MCF 10A (cell line): ENCODE measurements at regions of chr10 and their contacts with region 1.

Region 1: GRCh38 chr10:102752934-102753664 is 9.4 kb downstream of the WBP1L start:
- DNase-seq: peak; percentile 63
- H3K4me3 Mint-ChIP-seq: peak overlapping the region; percentile 27
- H3K27ac Mint-ChIP-seq: peak overlapping the region; percentile 88
- H3K4me1 Mint-ChIP-seq: peaks cover 27% of the 10 kb centered on the region
- H3K27me3 Mint-ChIP-seq: no peaks in the 10 kb centered on the region
- CTCF ChIP-seq: peak; percentile 45

Region 2: DNA sequence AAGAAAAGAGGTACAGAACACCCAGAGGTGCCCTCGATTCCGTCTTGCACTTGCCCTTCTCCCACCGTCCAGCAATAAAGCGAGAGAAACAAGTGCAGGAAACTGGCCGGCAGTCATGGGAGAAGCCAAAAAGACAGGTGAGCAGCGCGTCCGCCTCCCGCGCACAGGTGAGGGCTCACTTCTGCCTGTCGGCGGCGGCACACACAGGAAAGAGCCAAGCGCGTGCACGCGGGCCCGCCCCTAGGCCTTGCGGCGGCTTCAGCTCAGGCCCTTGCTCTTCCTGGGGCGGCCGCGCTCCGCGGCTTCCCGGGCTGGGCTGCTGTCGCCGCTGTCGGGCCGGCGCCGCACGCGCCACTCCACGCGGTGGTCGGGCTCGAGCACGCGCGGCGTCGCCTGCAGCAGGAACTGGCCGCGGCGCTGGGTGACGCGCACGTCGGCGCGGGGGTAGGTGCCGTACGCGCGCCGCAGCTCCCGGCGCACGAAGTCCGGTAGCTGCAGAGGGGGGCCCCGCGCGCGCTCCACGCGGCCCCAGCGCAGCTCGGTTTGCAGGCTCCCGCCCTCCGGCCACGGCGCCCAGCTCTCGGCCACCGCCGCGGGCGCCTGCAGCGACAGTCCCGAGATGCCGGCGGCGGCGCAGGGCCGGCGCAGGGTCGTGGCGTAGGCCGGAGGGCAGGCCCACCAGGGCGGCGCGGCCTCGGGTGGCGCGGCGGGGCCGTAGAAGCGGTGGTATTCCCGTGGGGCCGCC is 302.7 kb before region 1 on chr10:
- CTCF ChIA-PET with region 1: no interaction called
- POLR2A ChIA-PET with region 1: no interaction called
- intact Hi-C with region 1: no loop called
- DNase-seq: peak; percentile 76
- H3K4me3 Mint-ChIP-seq: peak overlapping the region; percentile 89
- H3K27ac Mint-ChIP-seq: peak overlapping the region; percentile 80
- H3K4me1 Mint-ChIP-seq: peaks cover 7% of the 10 kb centered on the region
- H3K27me3 Mint-ChIP-seq: no peaks in the 10 kb centered on the region
- CTCF ChIP-seq: no peak

Region 3: GRCh38 chr10:102665904-102666509 is 87.1 kb before region 1 on chr10:
- CTCF ChIA-PET with region 1: no interaction called
- POLR2A ChIA-PET with region 1: no interaction called
- intact Hi-C with region 1: no loop called
- DNase-seq: no peak
- H3K4me3 Mint-ChIP-seq: no peak overlapping the region
- H3K27ac Mint-ChIP-seq: no peak overlapping the region
- H3K4me1 Mint-ChIP-seq: peaks cover 10% of the 10 kb centered on the region
- H3K27me3 Mint-ChIP-seq: no peaks in the 10 kb centered on the region
- CTCF ChIP-seq: no peak

Region 4: DNA sequence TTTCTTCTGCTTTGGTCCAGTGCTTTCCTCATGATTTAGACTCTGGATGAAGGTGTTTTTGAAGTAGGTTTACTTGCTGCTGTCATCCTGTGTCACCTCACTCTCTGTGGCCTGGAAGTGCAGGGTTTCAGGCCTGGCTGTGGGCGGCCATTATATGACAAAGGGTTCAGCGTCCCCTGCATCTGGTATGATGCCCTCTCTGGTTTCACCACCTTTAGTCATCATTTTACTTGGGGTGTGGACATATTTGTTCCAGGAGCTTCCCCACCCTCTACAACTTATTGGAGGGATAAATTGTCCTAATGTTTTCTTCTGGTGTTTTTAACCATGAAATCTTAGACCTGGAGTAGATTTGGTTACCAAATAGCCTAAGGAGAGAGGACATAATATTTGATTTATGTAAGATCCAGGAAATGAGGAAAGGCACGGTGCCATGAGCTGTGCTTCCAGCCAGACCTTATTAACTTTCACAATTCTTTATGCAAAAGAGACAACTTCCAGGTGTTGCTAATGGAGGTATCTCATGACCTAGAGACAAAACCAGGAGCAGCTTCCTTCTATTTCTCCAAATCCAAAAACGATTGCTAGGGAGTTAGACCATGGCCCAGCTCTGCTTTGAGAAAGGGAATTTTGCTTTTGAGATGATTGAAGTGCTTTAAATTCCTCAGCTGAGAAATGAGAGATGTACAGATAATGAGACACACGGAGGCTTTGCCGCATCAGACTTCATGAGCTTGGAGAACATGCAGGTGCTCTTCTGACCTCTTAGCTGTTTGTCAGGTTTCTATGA is 11.5 kb after region 1 on chr10:
- CTCF ChIA-PET with region 1: interaction called, 71 read pairs
- POLR2A ChIA-PET with region 1: interaction called, 25 read pairs
- intact Hi-C with region 1: no loop called
- DNase-seq: peak; percentile 43
- H3K4me3 Mint-ChIP-seq: no peak overlapping the region
- H3K27ac Mint-ChIP-seq: peak overlapping the region; percentile 42
- H3K4me1 Mint-ChIP-seq: peaks cover 24% of the 10 kb centered on the region
- H3K27me3 Mint-ChIP-seq: no peaks in the 10 kb centered on the region
- CTCF ChIP-seq: no peak

Region 5: GRCh38 chr10:102776779-102777456 is 23.8 kb after region 1 on chr10:
- CTCF ChIA-PET with region 1: interaction called, 68 read pairs
- POLR2A ChIA-PET with region 1: interaction called, 120 read pairs
- intact Hi-C with region 1: loop called (anchors 2 kb)
- DNase-seq: peak; percentile 94
- H3K4me3 Mint-ChIP-seq: peak overlapping the region; percentile 64
- H3K27ac Mint-ChIP-seq: peak overlapping the region; percentile 64
- H3K4me1 Mint-ChIP-seq: peaks cover 41% of the 10 kb centered on the region
- H3K27me3 Mint-ChIP-seq: no peaks in the 10 kb centered on the region
- CTCF ChIP-seq: no peak

Region 6: DNA sequence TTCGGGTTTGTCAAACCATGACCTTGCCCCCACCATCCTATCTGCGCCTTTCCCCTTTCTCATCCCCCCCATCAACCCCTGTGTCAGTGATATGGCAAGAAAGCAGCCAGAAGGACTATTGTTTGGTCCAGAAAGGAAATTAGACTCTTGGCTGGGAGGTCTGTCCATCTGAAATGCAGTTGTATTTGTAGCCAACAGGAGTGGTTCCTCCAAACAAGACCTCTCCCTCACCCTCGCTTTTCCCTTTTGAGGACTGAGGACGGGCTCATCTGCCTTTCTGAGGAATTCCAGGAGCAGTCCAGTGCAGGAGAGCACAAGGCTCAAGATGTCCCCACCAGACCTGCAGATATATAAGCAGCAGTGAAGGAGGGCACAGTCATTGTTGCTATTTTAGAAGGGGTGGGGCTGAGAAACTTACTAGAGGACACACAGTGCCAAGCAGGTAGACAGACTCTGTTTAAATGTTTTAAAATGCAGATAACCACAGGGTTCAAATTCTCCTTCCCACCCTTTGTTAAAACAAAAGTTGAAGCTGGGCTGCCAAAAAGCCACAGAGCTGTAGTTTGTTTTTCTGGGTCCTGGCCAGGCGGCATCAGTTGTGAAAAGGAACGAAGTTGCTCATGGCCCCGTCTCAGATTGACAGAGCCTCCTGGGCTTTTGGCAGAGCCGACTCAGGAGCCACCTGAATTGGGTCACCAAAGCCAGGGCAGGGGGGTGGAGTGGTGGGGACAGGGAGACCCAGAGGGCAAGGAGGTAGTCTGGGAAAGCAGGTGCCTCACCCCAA is 46.8 kb after region 1 on chr10:
- CTCF ChIA-PET with region 1: interaction called, 12 read pairs
- POLR2A ChIA-PET with region 1: interaction called, 4 read pairs
- intact Hi-C with region 1: no loop called
- DNase-seq: no peak
- H3K4me3 Mint-ChIP-seq: no peak overlapping the region
- H3K27ac Mint-ChIP-seq: no peak overlapping the region
- H3K4me1 Mint-ChIP-seq: peaks cover 13% of the 10 kb centered on the region
- H3K27me3 Mint-ChIP-seq: no peaks in the 10 kb centered on the region
- CTCF ChIP-seq: no peak

Region 7: GRCh38 chr10:102835007-102835482 is 81.9 kb after region 1 on chr10:
- CTCF ChIA-PET with region 1: interaction called, 8 read pairs
- POLR2A ChIA-PET with region 1: no interaction called
- intact Hi-C with region 1: loop called (anchors 5 kb)
- DNase-seq: peak; percentile 82
- H3K4me3 Mint-ChIP-seq: no peak overlapping the region
- H3K27ac Mint-ChIP-seq: no peak overlapping the region
- H3K4me1 Mint-ChIP-seq: peaks cover 9% of the 10 kb centered on the region
- H3K27me3 Mint-ChIP-seq: peaks cover 12% of the 10 kb centered on the region
- CTCF ChIP-seq: peak; percentile 76

Region 8: DNA sequence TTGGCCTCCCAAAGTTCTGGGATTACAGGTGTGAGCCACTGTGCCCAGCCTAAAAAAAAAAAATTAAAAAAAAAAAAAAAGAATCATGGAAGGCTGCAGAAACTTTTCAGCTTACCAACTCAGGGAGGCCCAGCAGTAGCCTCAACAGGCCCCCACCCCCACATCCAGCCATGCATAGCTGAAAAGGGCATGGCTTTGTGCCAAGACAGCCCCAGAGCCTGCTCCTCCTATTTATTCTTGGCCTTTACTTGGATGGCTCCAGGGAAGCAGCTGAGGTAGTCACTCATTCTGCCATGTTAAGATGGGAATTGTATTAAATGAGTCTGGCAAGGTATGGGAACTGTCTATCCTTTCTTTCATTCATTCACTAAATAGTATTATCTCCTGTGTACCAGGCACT is 151.2 kb after region 1 on chr10:
- CTCF ChIA-PET with region 1: interaction called, 32 read pairs
- POLR2A ChIA-PET with region 1: interaction called, 4 read pairs
- intact Hi-C with region 1: loop called (anchors 1 kb)
- DNase-seq: no peak
- H3K4me3 Mint-ChIP-seq: no peak overlapping the region
- H3K27ac Mint-ChIP-seq: no peak overlapping the region
- H3K4me1 Mint-ChIP-seq: no peaks in the 10 kb centered on the region
- H3K27me3 Mint-ChIP-seq: no peaks in the 10 kb centered on the region
- CTCF ChIP-seq: no peak